ENCODE measurements at regions of chr1 and their contacts with region 1.

Region 1: GRCh38 chr1:153796791-153797659 is 21.8 kb downstream of the SLC27A3 start:
- DNase-seq: peak; percentile 73 to 96 (median 88)
- H3K4me3 ChIP-seq: no peak overlapping the region
- H3K27ac ChIP-seq: no peak overlapping the region
- H3K4me1 ChIP-seq: no peaks in the 10 kb centered on the region
- H3K27me3 ChIP-seq: no peaks in the 10 kb centered on the region
- CTCF ChIP-seq: peak; percentile 87 to 91 (median 89)
- POLR2A ChIP-seq: no peak

Region 2: DNA sequence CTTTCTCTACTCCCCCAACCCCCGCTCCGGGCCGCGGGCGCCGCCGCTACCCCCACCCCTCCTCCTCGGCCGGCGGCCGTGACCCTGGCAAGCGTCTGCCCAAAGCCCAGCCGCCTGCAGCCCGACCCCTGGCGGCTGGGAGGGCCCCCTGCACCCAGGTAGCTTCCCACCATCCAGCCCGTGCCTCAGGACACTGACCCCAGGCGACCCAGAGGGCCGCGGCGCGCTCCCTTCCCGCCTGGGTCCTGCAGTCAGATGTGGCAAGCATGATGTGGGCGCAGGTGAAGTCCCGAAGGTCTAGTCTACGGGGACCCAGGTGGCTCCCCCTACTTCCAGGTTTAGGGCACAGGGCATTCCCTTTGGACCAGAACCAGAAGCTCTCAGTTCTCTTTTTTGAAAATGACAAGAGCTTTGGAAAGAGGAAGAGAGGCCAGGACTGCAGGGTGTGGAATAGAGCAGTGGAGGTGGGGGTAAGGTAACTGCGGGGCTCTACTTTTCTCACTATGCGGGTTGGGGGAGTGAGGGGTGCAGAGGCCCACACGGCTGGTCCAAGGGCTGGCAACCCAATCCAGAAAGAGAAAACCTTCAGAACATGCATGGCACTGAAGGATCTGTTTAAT is 149.7 kb after region 1 on chr1 and contains the start of gene DENND4B:
- intact Hi-C with region 1: loop called (anchors 10 kb)
- DNase-seq: peak; percentile 85 to 91 (median 88)
- H3K4me3 ChIP-seq: peak within 1 kb of the TSS in 3 of 4 donors; percentile 46 to 98 (median 75)
- H3K27ac ChIP-seq: peak within 1 kb of the TSS; percentile 82 to 100 (median 94)
- H3K4me1 ChIP-seq: peaks cover 0 to 7% of the 10 kb centered on the region in 2 donors
- H3K27me3 ChIP-seq: no peaks in the 10 kb centered on the region
- CTCF ChIP-seq: peak; percentile 84 to 96 (median 88)
- POLR2A ChIP-seq: no peak
- total RNA-seq, gene DENND4B: 8.9 to 72.5 (median 34.6) TPM

Region 3: DNA sequence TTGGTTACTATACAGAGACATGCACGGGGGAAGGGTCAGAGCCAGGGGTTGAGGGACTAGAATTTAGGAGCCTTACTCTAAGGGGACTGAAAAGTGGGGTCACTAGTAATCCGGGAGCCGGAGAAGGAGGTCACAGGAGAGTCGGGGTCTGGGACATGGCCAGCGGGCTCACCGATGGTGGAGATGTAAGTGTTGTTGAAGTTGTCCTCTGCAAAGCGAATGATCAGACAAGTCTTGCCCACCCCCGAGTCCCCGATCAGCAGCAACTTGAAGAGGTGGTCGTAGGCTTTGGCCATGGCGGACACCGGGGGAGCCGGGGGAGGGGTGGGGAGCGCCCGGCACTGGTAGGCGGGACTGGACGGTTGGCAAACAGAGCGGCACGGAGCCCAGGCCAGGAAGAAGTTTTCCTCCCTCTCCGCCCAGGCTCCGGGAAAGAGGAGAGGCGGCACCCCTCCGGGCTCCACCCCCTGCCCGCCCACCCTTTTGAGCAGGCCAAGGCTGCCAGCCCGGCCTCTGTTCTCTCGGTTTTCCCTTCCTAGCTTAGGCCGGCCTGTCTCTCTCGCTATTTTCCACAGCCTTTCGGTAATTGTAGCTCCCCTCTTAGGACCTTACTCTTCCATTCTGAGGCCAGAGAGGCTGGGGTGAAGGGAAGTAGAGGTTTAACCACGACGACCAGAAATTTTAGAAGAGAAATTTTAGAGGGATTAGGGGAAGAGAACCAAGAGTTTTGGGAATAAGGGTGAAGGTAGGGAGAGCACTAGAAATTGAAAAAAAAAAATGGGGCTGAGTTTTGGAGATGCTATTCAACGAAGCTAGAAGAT is 189.1 kb after region 1 on chr1 and contains the start of gene RAB13:
- intact Hi-C with region 1: loop called (anchors 5 kb)
- DNase-seq: peak; percentile 87 to 92 (median 89)
- H3K4me3 ChIP-seq: peak within 1 kb of the TSS in 3 of 4 donors; percentile 53 to 84 (median 70)
- H3K27ac ChIP-seq: peak within 1 kb of the TSS; percentile 67 to 90 (median 88)
- H3K4me1 ChIP-seq: peaks cover 15 to 29% of the 10 kb centered on the region in 2 donors
- H3K27me3 ChIP-seq: no peaks in the 10 kb centered on the region
- CTCF ChIP-seq: no peak
- POLR2A ChIP-seq: peak in 1 of 2 donors; percentile 60
- total RNA-seq, gene RAB13: 22.9 to 165 (median 86.7) TPM